CD8-positive, alpha-beta memory T cell (primary cell): ENCODE measurements at regions of chr19 and their contacts with region 1.

Region 1: DNA sequence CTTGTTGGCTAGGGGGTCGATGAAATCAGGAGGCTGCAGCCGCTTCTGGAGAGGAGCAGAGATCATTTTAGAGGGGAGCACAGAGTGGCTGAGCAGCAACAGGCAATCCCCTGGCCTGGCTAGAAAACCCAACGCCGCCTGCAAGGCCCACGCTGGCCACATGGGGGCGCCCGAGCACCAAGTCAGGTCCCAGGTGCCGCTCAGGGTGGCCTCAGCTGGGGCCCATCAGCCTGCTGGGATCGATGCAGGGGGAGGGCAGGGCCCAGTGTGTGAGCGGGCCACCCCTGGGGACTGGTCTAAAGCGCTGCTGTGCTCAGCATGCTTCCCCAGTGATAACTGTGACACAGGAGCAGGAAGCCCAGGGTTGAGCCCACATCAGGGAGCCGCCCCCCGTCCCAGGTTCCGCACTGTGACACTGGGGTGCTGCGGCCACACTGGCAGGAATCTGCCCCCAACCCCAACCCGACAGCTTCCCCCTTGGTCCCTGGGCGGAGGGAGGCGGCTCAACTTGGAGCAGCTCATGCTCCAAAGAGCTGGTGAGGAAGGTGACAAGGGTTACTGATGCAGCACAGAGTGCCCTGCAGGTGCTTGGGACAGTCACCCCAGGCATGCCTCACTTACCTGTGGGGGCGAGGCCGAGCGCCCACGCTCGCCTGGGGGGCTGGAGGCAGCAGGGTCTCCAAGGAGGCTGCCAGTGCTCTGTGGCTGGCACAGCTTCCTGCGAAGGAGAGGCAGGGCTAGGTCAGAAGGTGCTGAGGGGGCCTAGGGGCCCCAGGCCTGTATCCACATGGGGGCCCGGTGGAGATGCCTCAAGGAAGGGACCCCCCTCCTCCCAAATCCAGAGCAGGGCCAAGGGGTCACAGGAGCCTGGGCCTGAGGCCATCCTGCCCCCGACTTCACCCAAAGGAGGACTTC is 13.3 kb upstream of the ISYNA1 start:
- DNase-seq: peak; percentile 78 to 89 (median 83)
- H3K4me3 ChIP-seq: no peak overlapping the region
- H3K4me3 Mint-ChIP-seq: peak overlapping the region in 1 of 7 donors; percentile 84
- H3K27ac ChIP-seq: no peak overlapping the region
- H3K27ac Mint-ChIP-seq: peak overlapping the region in 5 of 8 donors; percentile 14 to 94 (median 80)
- H3K4me1 ChIP-seq: no peaks in the 10 kb centered on the region
- H3K4me1 Mint-ChIP-seq: peaks cover 4 to 8% (median 5%) of the 10 kb centered on the region in 3 donors
- H3K27me3 ChIP-seq: no peaks in the 10 kb centered on the region
- H3K27me3 Mint-ChIP-seq: no peaks in the 10 kb centered on the region

Region 2: DNA sequence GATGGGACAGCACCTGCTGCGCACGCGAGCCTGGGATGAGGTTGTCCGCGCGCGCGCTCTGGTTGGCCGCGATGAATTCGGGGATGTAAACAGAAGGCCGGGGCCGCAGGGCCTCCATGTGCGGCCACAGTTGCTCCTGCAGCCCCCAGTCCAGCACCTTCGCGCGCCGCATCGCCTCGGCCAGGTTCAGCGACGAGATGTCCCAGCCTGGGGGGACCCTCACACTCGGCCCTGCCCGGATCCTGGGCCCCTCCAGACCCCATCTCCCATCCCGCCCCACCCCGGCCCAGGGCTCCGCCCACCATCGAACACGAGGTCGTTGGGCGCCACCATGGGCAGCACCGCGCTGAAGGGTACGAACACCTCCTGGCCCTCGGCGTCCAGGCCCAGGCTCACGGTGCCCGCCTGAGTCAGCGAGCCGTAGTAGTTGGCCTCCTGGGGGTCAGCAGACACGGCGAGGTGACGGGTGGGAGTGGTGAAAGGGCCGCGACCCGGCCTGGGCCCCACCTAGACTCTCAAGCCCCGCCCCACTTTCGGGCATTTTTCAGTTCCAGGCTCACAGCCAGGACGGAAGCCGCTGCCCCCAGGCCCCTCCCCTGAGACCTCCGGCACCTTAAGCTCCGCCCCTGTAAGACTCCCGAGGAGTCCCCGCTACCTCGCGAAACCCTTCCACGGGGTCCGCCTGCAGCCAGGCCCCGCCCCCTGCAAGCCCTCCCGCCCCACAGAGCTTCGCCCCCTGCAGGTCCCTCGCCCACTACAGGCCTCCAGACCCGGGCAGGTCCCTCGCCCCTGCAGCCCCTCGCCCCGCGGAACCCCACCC is 14.3 kb before region 1 on chr19:
- CTCF ChIA-PET with region 1: interaction called, 11 read pairs
- POLR2A ChIA-PET with region 1: no interaction called
- DNase-seq: peak; percentile 77 to 93 (median 84)
- H3K4me3 ChIP-seq: peak overlapping the region; percentile 37
- H3K4me3 Mint-ChIP-seq: peak overlapping the region; percentile 78 to 95 (median 87)
- H3K27ac ChIP-seq: no peak overlapping the region
- H3K27ac Mint-ChIP-seq: peak overlapping the region in 7 of 8 donors; percentile 43 to 88 (median 74)
- H3K4me1 ChIP-seq: peaks cover 22% of the 10 kb centered on the region
- H3K4me1 Mint-ChIP-seq: peaks cover 17 to 59% (median 19%) of the 10 kb centered on the region in 3 donors
- H3K27me3 ChIP-seq: no peaks in the 10 kb centered on the region
- H3K27me3 Mint-ChIP-seq: peaks cover 0 to 6% of the 10 kb centered on the region in 2 donors

Region 3: DNA sequence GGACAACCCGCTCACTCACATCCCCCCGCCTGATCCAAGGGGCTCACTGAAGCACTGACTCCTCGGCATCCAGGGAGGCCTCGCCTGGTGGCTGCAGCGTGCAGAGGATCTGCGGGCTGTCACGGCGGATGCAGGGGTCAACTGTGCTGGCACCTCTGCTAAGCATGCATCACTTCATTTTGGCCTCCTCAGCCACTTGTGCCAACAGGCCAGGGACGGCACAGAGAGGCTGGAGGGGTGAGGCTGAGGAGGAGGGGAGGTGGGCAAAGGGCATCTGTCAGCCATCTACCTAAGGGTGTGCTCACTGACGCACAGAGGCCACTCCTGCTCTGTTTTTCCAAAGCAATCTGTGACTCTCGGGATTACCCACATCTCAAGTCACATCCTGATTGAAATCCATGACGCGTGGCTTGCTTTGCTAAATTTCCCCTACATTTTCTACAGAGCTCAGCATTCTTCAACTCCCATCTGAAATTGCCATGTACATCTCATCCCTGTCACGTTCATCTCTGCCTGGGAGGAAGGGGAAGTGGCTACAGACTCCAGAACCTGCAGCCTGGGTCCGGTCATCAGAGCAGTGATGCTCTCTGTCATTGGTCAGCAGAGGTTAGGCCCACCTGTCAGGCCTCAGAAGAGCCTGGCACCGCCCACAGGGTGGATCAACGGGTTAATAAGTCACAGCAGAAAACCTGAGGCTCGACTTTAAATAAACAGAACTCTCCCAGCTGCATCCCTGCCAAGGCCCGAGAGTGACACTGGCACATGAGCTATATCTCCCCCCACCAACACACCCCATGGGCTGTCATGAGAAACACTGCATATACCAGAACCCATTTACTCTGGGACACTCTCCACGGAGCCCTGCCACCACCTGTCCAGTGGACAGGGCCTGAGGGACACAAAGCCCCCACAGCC is 53.0 kb after region 1 on chr19:
- CTCF ChIA-PET with region 1: interaction called, 10 read pairs
- POLR2A ChIA-PET with region 1: no interaction called
- DNase-seq: no peak
- H3K4me3 ChIP-seq: no peak overlapping the region
- H3K4me3 Mint-ChIP-seq: peak overlapping the region in 6 of 7 donors; percentile 21 to 79 (median 72)
- H3K27ac ChIP-seq: no peak overlapping the region
- H3K27ac Mint-ChIP-seq: peak overlapping the region; percentile 78 to 100 (median 94)
- H3K4me1 ChIP-seq: peaks cover 97% of the 10 kb centered on the region
- H3K4me1 Mint-ChIP-seq: peaks cover 90 to 100% (median 91%) of the 10 kb centered on the region in 3 donors
- H3K27me3 ChIP-seq: no peaks in the 10 kb centered on the region
- H3K27me3 Mint-ChIP-seq: peaks cover 0 to 4% of the 10 kb centered on the region in 2 donors

Region 4: DNA sequence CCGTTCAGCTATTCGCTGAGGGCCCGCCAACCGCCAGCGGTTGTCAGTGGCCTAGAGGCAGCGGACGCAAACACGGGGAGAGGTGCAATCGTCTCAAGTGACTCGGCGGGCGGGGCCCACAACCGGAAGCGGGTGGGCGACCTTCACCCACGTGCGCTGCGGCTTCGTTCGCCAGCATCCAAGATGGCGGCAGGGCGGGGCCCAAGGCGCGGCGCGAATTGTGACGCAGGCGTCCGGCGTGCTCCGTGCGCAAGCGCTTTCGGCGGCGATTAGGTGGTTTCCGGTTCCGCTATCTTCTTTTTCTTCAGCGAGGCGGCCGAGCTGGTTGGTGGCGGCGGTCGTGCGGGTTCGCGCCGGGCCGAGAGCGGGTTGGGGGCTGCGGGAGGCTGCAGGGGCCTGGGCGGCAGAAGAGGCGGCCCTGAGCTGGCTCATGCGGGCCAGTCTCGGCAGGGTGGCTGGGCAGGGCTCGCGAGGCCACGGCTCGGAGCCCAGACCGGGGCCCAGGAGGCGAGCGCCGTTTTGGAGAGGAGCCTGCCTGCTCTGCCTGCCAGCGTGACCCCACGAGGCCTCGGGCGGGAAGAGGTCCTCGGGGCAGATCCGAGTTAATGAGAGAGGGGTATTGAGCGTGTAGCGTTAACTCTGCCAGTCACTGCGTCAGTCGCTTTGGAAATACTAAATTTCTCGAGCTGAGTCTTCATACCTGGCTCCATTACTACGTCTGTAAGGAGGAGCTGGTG is 120.5 kb after region 1 on chr19 and contains the start of gene UBA52:
- CTCF ChIA-PET with region 1: interaction called, 12 read pairs
- POLR2A ChIA-PET with region 1: interaction called, 4 read pairs
- DNase-seq: peak; percentile 98 to 99 (median 99)
- H3K4me3 ChIP-seq: peak within 1 kb of the TSS; percentile 77
- H3K4me3 Mint-ChIP-seq: peak within 1 kb of the TSS; percentile 90 to 97 (median 93)
- H3K27ac ChIP-seq: peak within 1 kb of the TSS; percentile 96
- H3K27ac Mint-ChIP-seq: peak within 1 kb of the TSS; percentile 92 to 98 (median 94)
- H3K4me1 ChIP-seq: peaks cover 22% of the 10 kb centered on the region
- H3K4me1 Mint-ChIP-seq: peaks cover 19 to 33% (median 22%) of the 10 kb centered on the region in 3 donors
- H3K27me3 ChIP-seq: no peaks in the 10 kb centered on the region
- H3K27me3 Mint-ChIP-seq: no peaks in the 10 kb centered on the region
- total RNA-seq, gene UBA52: 1,684 to 1,700 TPM

Region 5: GRCh38 chr19:18846862-18847548 is 395.8 kb after region 1 on chr19:
- CTCF ChIA-PET with region 1: interaction called, 15 read pairs
- POLR2A ChIA-PET with region 1: no interaction called
- DNase-seq: peak; percentile 47 to 75 (median 51)
- H3K4me3 ChIP-seq: no peak overlapping the region
- H3K4me3 Mint-ChIP-seq: peak overlapping the region in 4 of 7 donors; percentile 37 to 66 (median 52)
- H3K27ac ChIP-seq: no peak overlapping the region
- H3K27ac Mint-ChIP-seq: peak overlapping the region in 6 of 8 donors; percentile 7 to 91 (median 49)
- H3K4me1 ChIP-seq: peaks cover 48% of the 10 kb centered on the region
- H3K4me1 Mint-ChIP-seq: peaks cover 60 to 77% (median 77%) of the 10 kb centered on the region in 3 donors
- H3K27me3 ChIP-seq: no peaks in the 10 kb centered on the region
- H3K27me3 Mint-ChIP-seq: peaks cover 0 to 3% of the 10 kb centered on the region in 2 donors